ENCODE measurements at regions of chr4 and their contacts with region 1.

Region 1: DNA sequence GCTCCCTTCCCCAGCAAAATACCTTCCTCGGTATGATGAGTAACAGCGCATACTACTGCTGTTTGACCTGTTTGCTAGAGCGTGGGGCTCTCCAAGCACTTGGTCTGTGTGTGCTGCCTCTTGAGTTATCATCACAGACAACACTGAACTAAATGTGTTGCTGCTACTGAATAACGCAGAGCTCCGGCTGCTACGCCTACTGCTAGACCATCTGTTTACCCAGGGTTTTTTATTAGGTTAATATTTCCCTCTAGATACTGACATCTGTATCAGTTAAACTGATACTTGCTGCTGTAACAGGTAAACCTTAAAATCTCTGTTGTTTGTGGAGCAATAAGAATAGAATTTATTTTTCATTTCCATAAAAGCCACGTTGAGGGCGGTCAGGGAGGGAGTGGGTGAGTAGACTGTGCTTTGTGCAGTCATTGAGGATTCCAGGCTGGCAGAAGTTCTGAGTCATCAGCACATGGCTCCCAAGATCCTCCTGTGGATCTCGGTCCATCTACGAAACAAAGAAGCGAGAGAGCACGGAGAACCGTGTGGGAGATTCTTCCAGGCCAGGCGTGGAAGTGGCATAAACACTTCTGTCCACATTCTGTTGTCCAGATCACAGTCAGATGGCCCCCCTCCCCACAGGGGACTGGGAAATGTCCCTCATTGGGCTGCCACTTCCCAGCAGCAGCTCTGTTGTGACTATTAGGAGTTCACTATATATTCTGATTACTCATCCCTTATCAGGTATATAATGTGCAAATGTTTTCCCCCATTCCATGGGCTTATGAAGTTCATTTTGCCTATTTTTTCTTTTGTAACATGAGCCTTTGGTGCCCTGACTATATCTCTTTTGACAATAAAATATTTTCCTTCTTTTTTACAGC is 14.1 kb downstream of the GRK4 start:
- DNase-seq: no peak
- H3K4me3 ChIP-seq: no peak overlapping the region
- H3K27ac ChIP-seq: no peak overlapping the region
- H3K4me1 ChIP-seq: no peaks in the 10 kb centered on the region
- H3K27me3 ChIP-seq: no peaks in the 10 kb centered on the region

Region 2: DNA sequence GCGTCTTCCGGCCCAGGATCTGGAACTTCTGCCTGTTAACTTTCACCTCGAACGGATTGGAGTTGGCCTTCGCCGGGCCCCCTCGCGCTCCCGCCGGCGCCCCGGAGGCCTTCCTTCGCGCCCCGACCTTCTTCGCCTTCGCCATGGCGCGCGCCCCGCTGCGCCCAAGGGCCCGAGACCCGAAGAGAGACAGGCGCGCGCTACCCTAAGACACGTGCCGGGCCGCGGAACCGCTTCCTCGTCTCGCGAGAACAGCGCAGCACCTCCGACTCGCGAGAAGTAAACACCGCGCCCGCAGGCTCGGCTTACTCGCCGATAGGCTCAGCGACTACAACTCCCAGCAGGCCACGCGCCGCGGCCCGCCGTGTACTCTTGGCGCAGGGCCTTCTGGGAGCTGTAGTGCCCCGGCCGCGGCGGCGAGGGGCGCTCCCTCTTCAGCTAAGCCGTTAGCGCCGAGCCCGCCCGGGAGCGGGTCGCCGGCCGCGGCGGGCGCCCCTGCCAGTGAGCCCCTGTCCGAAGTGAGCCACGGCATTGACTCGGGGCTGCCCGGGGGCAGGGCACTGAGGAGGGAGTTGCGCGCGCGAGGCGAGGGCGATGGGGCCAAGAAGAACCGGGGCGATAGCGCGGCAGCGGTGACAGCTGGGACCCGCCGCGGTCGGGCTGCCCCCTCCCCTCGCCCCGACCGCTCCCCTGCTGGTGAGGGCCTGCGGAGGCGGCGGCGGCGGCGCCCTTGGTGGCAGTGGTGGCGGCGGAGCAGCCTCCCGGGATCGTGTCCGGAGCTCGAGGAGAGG is 14.1 kb before region 1 on chr4 and contains the starts of genes GRK4 and NOP14:
- CTCF ChIA-PET with region 1: interaction called, 51 read pairs
- POLR2A ChIA-PET with region 1: interaction called, 5 read pairs
- DNase-seq: peak; percentile 99 to 100 (median 99)
- H3K4me3 ChIP-seq: peak within 1 kb of the TSS; percentile 62 to 91 (median 73)
- H3K27ac ChIP-seq: peak within 1 kb of the TSS; percentile 54 to 89
- H3K4me1 ChIP-seq: peaks cover 8 to 35% (median 28%) of the 10 kb centered on the region in 4 experiments
- H3K27me3 ChIP-seq: no peaks in the 10 kb centered on the region

Region 3: DNA sequence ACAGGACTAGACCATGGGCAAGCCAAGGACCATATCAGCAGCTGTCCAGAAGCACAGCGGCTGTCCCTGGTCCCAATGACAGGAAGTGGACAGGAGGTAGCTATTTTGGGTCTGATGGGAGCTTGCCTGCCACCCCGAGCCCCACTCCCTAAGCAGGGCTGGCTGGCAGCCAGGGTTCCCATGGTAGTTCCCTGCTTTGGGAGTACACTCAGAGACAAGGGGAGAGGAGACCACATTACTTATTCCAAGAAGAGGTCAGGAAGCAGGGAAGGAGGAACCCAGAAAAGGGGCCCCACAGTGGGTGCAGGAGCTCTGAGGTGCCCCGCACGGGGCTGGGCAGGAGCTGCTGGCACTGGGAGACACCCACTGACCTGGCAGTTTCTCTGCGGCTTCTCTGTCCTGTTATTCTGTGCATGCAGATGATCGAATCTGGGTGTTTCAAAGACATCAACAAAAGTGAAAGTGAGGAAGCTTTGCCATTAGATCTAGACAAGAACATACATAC is 60.6 kb after region 1 on chr4:
- CTCF ChIA-PET with region 1: interaction called, 13 read pairs
- POLR2A ChIA-PET with region 1: interaction called, 5 read pairs
- DNase-seq: peak in 2 of 3 donors; percentile 73 to 78
- H3K4me3 ChIP-seq: peak overlapping the region in 6 of 7 experiments; percentile 13 to 76 (median 57)
- H3K27ac ChIP-seq: no peak overlapping the region
- H3K4me1 ChIP-seq: peaks cover 0 to 40% (median 24%) of the 10 kb centered on the region in 4 experiments
- H3K27me3 ChIP-seq: no peaks in the 10 kb centered on the region

Region 4: GRCh38 chr4:3062471-3062870 is 85.0 kb after region 1 on chr4:
- CTCF ChIA-PET with region 1: no interaction called
- POLR2A ChIA-PET with region 1: no interaction called
- DNase-seq: peak in 1 of 3 donors; percentile 61
- H3K4me3 ChIP-seq: no peak overlapping the region
- H3K27ac ChIP-seq: no peak overlapping the region
- H3K4me1 ChIP-seq: peaks cover 0 to 16% (median 14%) of the 10 kb centered on the region in 4 experiments
- H3K27me3 ChIP-seq: no peaks in the 10 kb centered on the region

Region 5: GRCh38 chr4:3318561-3319021 is 341.1 kb after region 1 on chr4:
- CTCF ChIA-PET with region 1: no interaction called
- POLR2A ChIA-PET with region 1: no interaction called
- DNase-seq: no peak
- H3K4me3 ChIP-seq: no peak overlapping the region
- H3K27ac ChIP-seq: no peak overlapping the region
- H3K4me1 ChIP-seq: no peaks in the 10 kb centered on the region
- H3K27me3 ChIP-seq: no peaks in the 10 kb centered on the region